Endothelial cell of umbilical vein (primary cell): ENCODE measurements at regions of chr1 and their contacts with region 1.

Region 1: DNA sequence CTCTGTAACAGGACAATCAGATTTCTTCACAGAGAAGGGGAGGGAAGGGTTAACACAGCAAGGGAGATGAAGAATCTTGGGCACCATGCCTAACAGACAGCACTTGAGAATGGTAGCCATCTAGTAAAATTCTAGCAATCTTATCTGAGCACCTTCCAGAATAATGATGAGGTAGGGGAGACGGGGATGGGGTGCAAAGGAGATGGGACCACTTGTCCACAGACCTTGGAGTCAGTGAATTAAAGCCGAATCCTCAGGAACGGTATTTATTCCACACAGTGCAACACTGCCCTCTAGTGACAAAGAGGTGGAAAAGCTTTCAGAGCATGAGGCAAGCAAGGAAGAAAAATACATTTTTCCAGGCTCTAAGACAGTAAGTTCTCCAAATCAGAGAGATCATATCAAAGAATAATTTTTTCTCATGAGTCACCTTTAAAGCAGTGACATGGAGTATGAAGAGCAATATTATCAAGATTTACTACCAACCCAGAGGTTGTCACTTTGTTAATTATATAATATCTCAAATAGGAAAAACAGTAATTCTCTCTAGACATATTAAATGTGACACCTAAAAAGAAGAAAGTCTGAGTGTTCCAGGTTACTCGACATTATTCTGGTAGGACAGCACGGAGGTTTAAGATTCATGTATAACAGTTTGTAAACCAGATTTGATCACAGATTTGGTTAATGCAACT is 43.3 kb upstream of the LPAR3 start:
- DNase-seq: peak; percentile 57
- H3K4me3 ChIP-seq: no peak overlapping the region
- H3K27ac ChIP-seq: no peak overlapping the region
- H3K4me1 ChIP-seq: peaks cover 5% of the 10 kb centered on the region
- H3K27me3 ChIP-seq: peaks cover 17 to 36% of the 10 kb centered on the region in 2 experiments
- CTCF ChIP-seq: peak; percentile 71 to 77
- POLR2A ChIP-seq: no peak

Region 2: GRCh38 chr1:84122780-84123382 is 813.4 kb before region 1 on chr1:
- CTCF ChIA-PET with region 1: interaction called, 3 read pairs
- POLR2A ChIA-PET with region 1: no interaction called
- dilution Hi-C with region 1: no loop called
- intact Hi-C with region 1: loop called (anchors 5 kb)
- DNase-seq: peak; percentile 67
- H3K4me3 ChIP-seq: no peak overlapping the region
- H3K27ac ChIP-seq: no peak overlapping the region
- H3K4me1 ChIP-seq: no peaks in the 10 kb centered on the region
- H3K27me3 ChIP-seq: no peaks in the 10 kb centered on the region
- CTCF ChIP-seq: peak; percentile 42 to 51
- POLR2A ChIP-seq: no peak

Region 3: GRCh38 chr1:84476225-84476624 is 460.0 kb before region 1 on chr1:
- CTCF ChIA-PET with region 1: no interaction called
- POLR2A ChIA-PET with region 1: no interaction called
- dilution Hi-C with region 1: no loop called
- intact Hi-C with region 1: no loop called
- DNase-seq: no peak
- H3K4me3 ChIP-seq: no peak overlapping the region
- H3K27ac ChIP-seq: no peak overlapping the region
- H3K4me1 ChIP-seq: peaks cover 14% of the 10 kb centered on the region
- H3K27me3 ChIP-seq: peaks cover 1 to 2% of the 10 kb centered on the region in 2 experiments
- CTCF ChIP-seq: no peak
- POLR2A ChIP-seq: no peak

Region 4: GRCh38 chr1:84603941-84604830 is 332.1 kb before region 1 on chr1:
- CTCF ChIA-PET with region 1: interaction called, 10 read pairs
- POLR2A ChIA-PET with region 1: no interaction called
- dilution Hi-C with region 1: no loop called
- intact Hi-C with region 1: no loop called
- DNase-seq: peak; percentile 91
- H3K4me3 ChIP-seq: peak overlapping the region in 2 of 3 experiments; percentile 11 to 46
- H3K27ac ChIP-seq: peak overlapping the region; percentile 88
- H3K4me1 ChIP-seq: peaks cover 30% of the 10 kb centered on the region
- H3K27me3 ChIP-seq: no peaks in the 10 kb centered on the region
- CTCF ChIP-seq: peak; percentile 66 to 77
- POLR2A ChIP-seq: no peak

Region 5: GRCh38 chr1:84758968-84759491 is 177.2 kb before region 1 on chr1:
- CTCF ChIA-PET with region 1: interaction called, 22 read pairs
- POLR2A ChIA-PET with region 1: no interaction called
- dilution Hi-C with region 1: no loop called
- intact Hi-C with region 1: no loop called
- DNase-seq: no peak
- H3K4me3 ChIP-seq: no peak overlapping the region
- H3K27ac ChIP-seq: no peak overlapping the region
- H3K4me1 ChIP-seq: no peaks in the 10 kb centered on the region
- H3K27me3 ChIP-seq: peaks cover 14 to 15% of the 10 kb centered on the region in 2 experiments
- CTCF ChIP-seq: no peak
- POLR2A ChIP-seq: no peak

Region 6: DNA sequence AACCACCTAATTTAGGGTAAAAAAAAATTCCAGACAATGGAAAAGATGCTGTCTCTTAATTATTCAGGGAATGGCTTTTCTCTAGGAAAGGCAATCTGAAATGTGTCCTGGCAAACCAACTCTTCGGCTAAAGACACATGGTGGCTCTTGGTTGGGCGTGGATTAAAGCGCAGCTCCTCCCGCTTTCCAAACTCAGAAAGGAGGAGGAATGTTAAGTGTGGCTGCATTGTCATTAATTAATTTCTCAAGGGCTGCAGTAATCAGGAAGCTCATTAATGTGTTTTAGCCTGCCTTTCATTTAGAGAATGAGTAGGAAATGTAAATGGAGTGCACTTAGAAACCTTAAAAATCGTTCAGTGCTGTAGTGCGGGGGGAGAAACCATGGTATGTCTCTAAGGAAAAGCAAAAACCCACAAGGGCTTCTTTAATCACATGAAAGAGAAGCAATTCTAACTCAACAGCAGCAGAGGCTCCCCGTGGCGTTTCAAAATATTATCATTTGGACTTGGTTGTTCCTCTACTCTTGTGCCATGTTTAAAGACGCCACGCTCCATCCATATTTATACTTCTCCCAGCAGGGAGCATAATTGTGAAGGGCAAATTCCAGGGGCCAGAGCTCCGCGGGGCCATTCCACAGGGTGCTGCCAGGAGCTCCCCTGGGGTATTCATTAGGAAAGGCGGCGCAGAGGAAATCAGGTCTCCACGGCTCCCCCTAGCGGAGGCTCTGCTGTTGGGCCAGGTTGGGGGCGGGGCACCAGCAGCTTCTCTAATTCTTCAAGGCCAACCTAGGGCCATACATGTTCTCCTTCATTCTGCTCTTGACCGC is 154.1 kb before region 1 on chr1:
- CTCF ChIA-PET with region 1: interaction called, 22 read pairs
- POLR2A ChIA-PET with region 1: no interaction called
- dilution Hi-C with region 1: no loop called
- intact Hi-C with region 1: loop called (anchors 1 kb)
- DNase-seq: peak; percentile 48
- H3K4me3 ChIP-seq: no peak overlapping the region
- H3K27ac ChIP-seq: no peak overlapping the region
- H3K4me1 ChIP-seq: no peaks in the 10 kb centered on the region
- H3K27me3 ChIP-seq: peaks cover 3 to 19% of the 10 kb centered on the region in 2 experiments
- CTCF ChIP-seq: peak; percentile 80 to 87
- POLR2A ChIP-seq: no peak

Region 7: GRCh38 chr1:84888753-84889152 is 47.5 kb before region 1 on chr1:
- CTCF ChIA-PET with region 1: no interaction called
- POLR2A ChIA-PET with region 1: no interaction called
- dilution Hi-C with region 1: no loop called
- intact Hi-C with region 1: no loop called
- DNase-seq: no peak
- H3K4me3 ChIP-seq: no peak overlapping the region
- H3K27ac ChIP-seq: no peak overlapping the region
- H3K4me1 ChIP-seq: no peaks in the 10 kb centered on the region
- H3K27me3 ChIP-seq: peaks cover 15 to 34% of the 10 kb centered on the region in 2 experiments
- CTCF ChIP-seq: no peak
- POLR2A ChIP-seq: no peak

Region 8: GRCh38 chr1:84899969-84900368 is 36.3 kb before region 1 on chr1:
- CTCF ChIA-PET with region 1: no interaction called
- POLR2A ChIA-PET with region 1: no interaction called
- dilution Hi-C with region 1: no loop called
- intact Hi-C with region 1: loop called (anchors 2 kb)
- DNase-seq: no peak
- H3K4me3 ChIP-seq: no peak overlapping the region
- H3K27ac ChIP-seq: no peak overlapping the region
- H3K4me1 ChIP-seq: no peaks in the 10 kb centered on the region
- H3K27me3 ChIP-seq: peaks cover 3 to 10% of the 10 kb centered on the region in 2 experiments
- CTCF ChIP-seq: no peak
- POLR2A ChIP-seq: no peak

Region 9: GRCh38 chr1:85259118-85259911 is 323.1 kb after region 1 on chr1 and contains the start of gene C1orf52:
- CTCF ChIA-PET with region 1: interaction called, 520 read pairs
- POLR2A ChIA-PET with region 1: no interaction called
- dilution Hi-C with region 1: no loop called
- intact Hi-C with region 1: no loop called
- DNase-seq: peak; percentile 94
- H3K4me3 ChIP-seq: peak within 1 kb of the TSS; percentile 77 to 90 (median 82)
- H3K27ac ChIP-seq: peak within 1 kb of the TSS; percentile 82
- H3K4me1 ChIP-seq: peaks cover 25% of the 10 kb centered on the region
- H3K27me3 ChIP-seq: no peaks in the 10 kb centered on the region
- CTCF ChIP-seq: peak; percentile 88 to 97
- POLR2A ChIP-seq: peak; percentile 90
- total RNA-seq, gene C1orf52: 26.7 and 29.1 TPM in 2 replicates